AG04450 (cell line): ENCODE measurements at regions of chr6 and their contacts with region 1.

Region 1: GRCh38 chr6:137271245-137272183 is 52.3 kb upstream of the IFNGR1 start:
- DNase-seq: peak; percentile 10
- H3K4me3 ChIP-seq: no peak overlapping the region
- H3K27ac ChIP-seq: no peak overlapping the region
- H3K27me3 ChIP-seq: no peaks in the 10 kb centered on the region
- CTCF ChIP-seq: peak; percentile 96

Region 2: GRCh38 chr6:137415127-137415833 is 143.8 kb after region 1 on chr6:
- CTCF ChIA-PET with region 1: interaction called, 18 read pairs
- POLR2A ChIA-PET with region 1: no interaction called
- DNase-seq: peak; percentile 7
- H3K4me3 ChIP-seq: peak overlapping the region; percentile 55
- H3K27ac ChIP-seq: peak overlapping the region; percentile 3
- H3K27me3 ChIP-seq: peaks cover 12% of the 10 kb centered on the region
- CTCF ChIP-seq: peak; percentile 84

Region 3: GRCh38 chr6:137641474-137642077 is 370.1 kb after region 1 on chr6:
- CTCF ChIA-PET with region 1: interaction called, 15 read pairs
- POLR2A ChIA-PET with region 1: no interaction called
- DNase-seq: peak; percentile 41
- H3K4me3 ChIP-seq: no peak overlapping the region
- H3K27ac ChIP-seq: no peak overlapping the region
- H3K27me3 ChIP-seq: peaks cover 2% of the 10 kb centered on the region
- CTCF ChIP-seq: peak; percentile 75